K562 (cell line): ENCODE measurements at regions of chr1 and their contacts with region 1.

Region 1: DNA sequence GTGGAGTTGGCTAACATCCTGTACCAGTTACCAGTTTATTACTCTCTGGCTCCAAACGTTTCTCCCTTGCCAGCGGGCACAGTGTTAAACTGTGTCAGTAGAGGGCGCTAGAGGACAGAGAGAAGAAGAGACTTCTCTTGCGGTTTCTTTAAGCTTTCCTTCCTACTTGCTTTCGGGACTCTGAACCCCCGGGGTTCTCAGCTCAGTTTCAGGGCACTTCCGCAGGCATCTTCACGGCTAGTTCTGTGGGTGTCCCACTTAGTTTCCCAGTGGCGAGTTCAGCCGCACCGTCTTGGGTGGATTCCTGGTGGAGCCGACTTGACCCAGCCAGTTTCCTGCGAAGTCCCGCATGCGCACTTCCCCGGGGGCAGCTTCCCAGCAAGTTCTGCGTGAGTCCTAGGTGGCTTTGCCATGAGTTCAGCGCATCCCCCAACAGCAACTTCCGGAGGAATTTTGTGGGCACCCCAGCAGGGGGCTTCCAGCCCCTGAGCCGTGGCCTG is 37.9 kb upstream of the BTG2 start:
- DNase-seq: peak; percentile 74 to 91 (median 76)
- ATAC-seq: peak; percentile 79
- H3K4me3 ChIP-seq: peak overlapping the region; percentile 43
- H3K27ac ChIP-seq: no peak overlapping the region
- H3K4me1 ChIP-seq: peaks cover 5 to 8% of the 10 kb centered on the region in 2 experiments; a peak in 4 of 5 replicates
- H3K27me3 ChIP-seq: peaks cover 13 to 18% of the 10 kb centered on the region in 2 experiments
- CTCF ChIP-seq: peak; percentile 93 to 97 (median 96)
- EP300 ChIP-seq: no peak
- POLR2A ChIP-seq: no peak
- RAD21 ChIP-seq: peak; percentile 88 to 92

Region 2: GRCh38 chr1:203031467-203031866 is 235.9 kb before region 1 on chr1:
- CTCF ChIA-PET with region 1: no interaction called
- POLR2A ChIA-PET with region 1: no interaction called
- in situ Hi-C with region 1: no loop called
- intact Hi-C with region 1: loop called (anchors 2 kb)
- DNase-seq: peak; percentile 55 to 67 (median 61)
- ATAC-seq: peak; percentile 52
- H3K4me3 ChIP-seq: no peak overlapping the region
- H3K27ac ChIP-seq: no peak overlapping the region
- H3K4me1 ChIP-seq: peaks cover 6 to 23% of the 10 kb centered on the region in 2 experiments; a peak in 4 of 5 replicates
- H3K27me3 ChIP-seq: peaks cover 14 to 15% of the 10 kb centered on the region in 2 experiments; a peak in 3 of 5 replicates
- CTCF ChIP-seq: peak; percentile 73 to 91 (median 89)
- EP300 ChIP-seq: no peak; the same call in 1 of the 2 replicates
- POLR2A ChIP-seq: no peak
- RAD21 ChIP-seq: peak in 1 of 2 experiments; percentile 62; a peak in 2 of 4 replicates

Region 3: GRCh38 chr1:203117611-203118575 is 149.5 kb before region 1 on chr1:
- CTCF ChIA-PET with region 1: interaction called, 12 read pairs
- POLR2A ChIA-PET with region 1: no interaction called
- in situ Hi-C with region 1: no loop called
- intact Hi-C with region 1: loop called (anchors 5 kb)
- DNase-seq: peak; percentile 78 to 96 (median 94)
- ATAC-seq: peak; percentile 100
- H3K4me3 ChIP-seq: no peak overlapping the region
- H3K27ac ChIP-seq: no peak overlapping the region
- H3K4me1 ChIP-seq: peaks cover 0 to 5% of the 10 kb centered on the region in 2 experiments; a peak in 1 of 5 replicates
- H3K27me3 ChIP-seq: peaks cover 12 to 58% of the 10 kb centered on the region in 2 experiments; a peak in 4 of 5 replicates
- CTCF ChIP-seq: peak; percentile 87 to 92 (median 89)
- EP300 ChIP-seq: no peak
- POLR2A ChIP-seq: no peak
- RAD21 ChIP-seq: peak; percentile 94 to 96

Region 4: GRCh38 chr1:203280996-203281395 is 13.6 kb after region 1 on chr1:
- CTCF ChIA-PET with region 1: no interaction called
- POLR2A ChIA-PET with region 1: no interaction called
- in situ Hi-C with region 1: no loop called
- intact Hi-C with region 1: no loop called
- DNase-seq: no peak
- ATAC-seq: no peak
- H3K4me3 ChIP-seq: no peak overlapping the region
- H3K27ac ChIP-seq: no peak overlapping the region
- H3K4me1 ChIP-seq: peaks cover 17 to 30% of the 10 kb centered on the region in 2 experiments
- H3K27me3 ChIP-seq: peaks cover 0 to 10% of the 10 kb centered on the region in 2 experiments; a peak in 1 of 5 replicates
- CTCF ChIP-seq: 0 out of 6 replicates have a peak, but pooled peaks of 2 of the 3 experiments have one; percentile 16 to 19
- EP300 ChIP-seq: no peak
- POLR2A ChIP-seq: no peak
- RAD21 ChIP-seq: peak in 1 of 2 experiments; percentile 22; a peak in 1 of 4 replicates

Region 5: DNA sequence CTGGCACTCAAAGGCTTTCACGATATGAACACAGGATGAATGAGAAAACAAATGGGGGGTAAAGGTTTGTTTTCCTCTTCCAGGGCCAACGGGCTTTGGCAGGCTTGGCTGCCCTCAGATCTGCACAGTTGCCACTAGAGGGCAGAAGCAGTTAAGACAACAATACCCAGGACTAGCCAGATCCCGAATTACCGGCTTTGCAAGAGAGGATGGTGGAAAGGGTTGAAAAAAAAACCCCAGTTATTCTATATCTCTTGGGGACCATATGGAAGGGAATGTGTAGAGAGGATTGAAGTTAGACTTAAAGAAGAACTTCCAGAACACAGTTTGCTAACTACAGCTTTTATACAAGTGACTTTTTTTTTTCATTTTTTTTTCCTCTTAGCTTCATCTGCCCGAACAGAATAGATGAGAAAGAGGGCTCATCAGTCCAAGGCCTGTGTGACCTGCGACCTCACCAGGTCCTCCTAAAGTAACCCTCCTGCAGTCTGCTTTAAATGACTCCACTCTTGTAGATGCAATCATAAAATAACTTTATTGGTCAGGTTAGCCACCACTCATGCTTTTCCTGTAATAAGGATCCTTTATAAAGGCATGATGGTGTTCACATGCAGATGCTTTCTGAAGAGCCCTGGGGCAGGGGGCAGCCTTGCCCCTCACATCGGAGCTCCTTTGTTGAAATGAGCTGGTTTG is 72.9 kb after region 1 on chr1:
- CTCF ChIA-PET with region 1: interaction called, 226 read pairs
- POLR2A ChIA-PET with region 1: interaction called, 3 read pairs
- in situ Hi-C with region 1: loop called (anchors 5 kb)
- intact Hi-C with region 1: loop called (anchors 1 kb)
- DNase-seq: peak; percentile 84 to 88 (median 88)
- ATAC-seq: peak; percentile 87
- H3K4me3 ChIP-seq: no peak overlapping the region
- H3K27ac ChIP-seq: no peak overlapping the region
- H3K4me1 ChIP-seq: peaks cover 0 to 4% of the 10 kb centered on the region in 2 experiments; a peak in 3 of 5 replicates
- H3K27me3 ChIP-seq: peaks cover 26 to 44% of the 10 kb centered on the region in 2 experiments
- CTCF ChIP-seq: peak; percentile 93 to 97 (median 94)
- EP300 ChIP-seq: no peak
- POLR2A ChIP-seq: no peak
- RAD21 ChIP-seq: peak; percentile 93 to 94

Region 6: GRCh38 chr1:203486618-203487370 is 219.4 kb after region 1 on chr1:
- CTCF ChIA-PET with region 1: interaction called, 28 read pairs
- POLR2A ChIA-PET with region 1: no interaction called
- in situ Hi-C with region 1: loop called (anchors 5 kb)
- intact Hi-C with region 1: no loop called
- DNase-seq: no peak
- ATAC-seq: peak; percentile 5
- H3K4me3 ChIP-seq: peak overlapping the region; percentile 38; the same call in 1 of the 2 replicates
- H3K27ac ChIP-seq: no peak overlapping the region
- H3K4me1 ChIP-seq: peaks cover 0 to 14% of the 10 kb centered on the region in 2 experiments; a peak in 2 of 5 replicates
- H3K27me3 ChIP-seq: peaks cover 34 to 45% of the 10 kb centered on the region in 2 experiments
- CTCF ChIP-seq: no peak
- EP300 ChIP-seq: no peak
- POLR2A ChIP-seq: no peak
- RAD21 ChIP-seq: no peak